Motor neuron (in vitro differentiated cells): ENCODE measurements at regions of chr22 and their contacts with region 1.

Region 1: GRCh38 chr22:26172389-26172990 is 3.2 kb downstream of the SEZ6L start:
- ATAC-seq: peak in 3 of 8 experiments; percentile 20 to 31 (median 29)
- H3K4me3 ChIP-seq: no peak overlapping the region
- H3K27ac ChIP-seq: no peak overlapping the region
- H3K4me1 ChIP-seq: peaks cover 2 to 5% of the 10 kb centered on the region in 2 donors

Region 2: DNA sequence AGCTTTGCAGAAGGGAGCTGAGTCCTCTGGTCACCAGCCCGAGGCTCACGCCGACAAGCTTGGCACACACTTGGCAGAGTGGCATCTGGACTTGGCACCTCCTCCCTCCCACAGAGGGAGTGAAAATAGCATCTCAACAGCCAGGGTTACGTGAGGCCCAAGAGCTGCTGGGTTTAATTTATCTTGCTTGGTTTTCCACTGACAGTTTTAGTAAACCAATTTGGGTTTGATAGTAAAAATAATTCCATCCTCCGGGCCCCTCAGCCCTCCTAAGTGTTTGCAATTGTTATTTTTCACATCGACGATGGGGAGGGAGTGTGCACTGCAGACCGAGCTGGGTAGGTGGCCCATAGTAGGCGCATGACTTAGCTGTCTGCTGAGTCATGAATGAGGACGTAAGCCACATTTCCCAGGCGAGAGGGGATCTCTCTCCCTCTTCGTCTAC is 149.0 kb after region 1 on chr22:
- in situ Hi-C with region 1: loop called in 2 of 9 experiments (anchors 10 to 25 kb)
- ATAC-seq: peak in 7 of 8 experiments; percentile 51 to 69 (median 60)
- H3K4me3 ChIP-seq: no peak overlapping the region
- H3K27ac ChIP-seq: no peak overlapping the region
- H3K4me1 ChIP-seq: peaks cover 10 to 13% of the 10 kb centered on the region in 2 donors

Region 3: DNA sequence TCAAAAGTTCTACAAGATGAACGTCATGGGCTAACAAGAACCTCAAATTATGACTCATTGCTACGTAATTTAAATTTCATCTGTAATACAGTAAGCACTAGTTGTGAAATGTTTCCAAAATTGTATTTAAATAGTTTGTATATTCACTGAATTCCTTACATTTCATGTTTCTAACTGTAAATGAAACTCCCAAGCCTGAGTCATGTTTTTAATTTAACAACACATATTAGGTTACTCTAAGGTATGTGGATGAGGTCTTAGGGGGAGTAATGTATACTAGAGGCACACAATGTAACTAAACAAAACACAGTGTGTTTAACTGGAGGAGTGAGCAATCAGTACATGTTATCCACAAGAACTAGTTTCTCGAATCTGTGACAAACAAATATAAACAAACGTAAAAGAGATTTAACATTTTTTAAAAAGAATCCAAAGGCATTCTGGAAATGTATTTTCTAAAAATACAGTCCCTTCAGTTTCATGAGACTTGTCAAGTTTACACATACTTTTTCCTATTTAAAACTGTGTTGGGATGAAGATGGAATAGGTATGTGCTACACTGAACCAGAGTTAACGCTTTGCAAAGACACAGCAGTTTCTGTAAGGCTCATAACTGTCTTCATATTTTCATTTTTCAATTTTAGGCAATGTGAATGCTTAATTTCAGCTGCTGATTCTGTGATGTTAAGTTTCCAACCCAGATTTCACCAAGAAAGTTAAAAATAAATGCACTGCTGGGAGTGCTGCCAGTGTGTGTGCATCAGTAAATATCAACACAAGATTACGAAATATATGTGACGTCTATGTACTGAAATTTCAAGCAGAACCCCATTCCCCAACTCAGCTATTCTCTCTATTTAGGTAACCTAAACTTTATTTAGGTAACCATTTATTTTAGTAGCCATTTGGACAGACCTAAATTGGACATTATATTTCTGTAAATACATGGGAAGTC is 1693.9 kb after region 1 on chr22:
- in situ Hi-C with region 1: no loop called
- ATAC-seq: peak in 4 of 8 experiments; percentile 29 to 91 (median 80)
- H3K4me3 ChIP-seq: no peak overlapping the region
- H3K27ac ChIP-seq: no peak overlapping the region
- H3K4me1 ChIP-seq: peaks cover 7 to 15% of the 10 kb centered on the region in 2 donors